H1 (cell line): ENCODE measurements at regions of chr11 and their contacts with region 1.

Region 1: GRCh38 chr11:65850831-65851811 is 6.9 kb downstream of the CFL1 start:
- DNase-seq: peak in 1 of 2 experiments; percentile 93
- H3K4me3 ChIP-seq: no peak overlapping the region
- H3K27ac ChIP-seq: no peak overlapping the region
- H3K4me1 ChIP-seq: peaks cover 0 to 5% (median under 1%) of the 10 kb centered on the region in 4 experiments; a peak in 5 of 7 replicates
- H3K27me3 ChIP-seq: no peaks in the 10 kb centered on the region; a peak in 1 of 7 replicates
- CTCF ChIP-seq: peak in 2 of 3 experiments; percentile 69 to 88; a peak in 3 of 4 replicates
- EP300 ChIP-seq: no peak
- POLR2A ChIP-seq: peak in 1 of 2 experiments; percentile 27; a peak in 2 of 3 replicates
- RAD21 ChIP-seq: peak; percentile 32 to 48; a peak in 3 of 4 replicates

Region 2: GRCh38 chr11:65720237-65720934 is 130.7 kb before region 1 on chr11 and contains the start of gene RNASEH2C:
- CTCF ChIA-PET with region 1: interaction called, 6 read pairs
- POLR2A ChIA-PET with region 1: interaction called, 11 read pairs
- DNase-seq: peak; percentile 44 to 90
- H3K4me3 ChIP-seq: peak within 1 kb of the TSS; percentile 83 to 91 (median 85)
- H3K27ac ChIP-seq: peak within 1 kb of the TSS; percentile 90
- H3K4me1 ChIP-seq: peaks cover 0 to 6% (median 3%) of the 10 kb centered on the region in 4 experiments; a peak in 2 of 7 replicates
- H3K27me3 ChIP-seq: no peaks in the 10 kb centered on the region
- CTCF ChIP-seq: no peak
- EP300 ChIP-seq: no peak
- POLR2A ChIP-seq: peak; percentile 80 to 81
- RAD21 ChIP-seq: no peak
- total RNA-seq, gene RNASEH2C: 37.9 and 40.2 TPM in 2 replicates

Region 3: DNA sequence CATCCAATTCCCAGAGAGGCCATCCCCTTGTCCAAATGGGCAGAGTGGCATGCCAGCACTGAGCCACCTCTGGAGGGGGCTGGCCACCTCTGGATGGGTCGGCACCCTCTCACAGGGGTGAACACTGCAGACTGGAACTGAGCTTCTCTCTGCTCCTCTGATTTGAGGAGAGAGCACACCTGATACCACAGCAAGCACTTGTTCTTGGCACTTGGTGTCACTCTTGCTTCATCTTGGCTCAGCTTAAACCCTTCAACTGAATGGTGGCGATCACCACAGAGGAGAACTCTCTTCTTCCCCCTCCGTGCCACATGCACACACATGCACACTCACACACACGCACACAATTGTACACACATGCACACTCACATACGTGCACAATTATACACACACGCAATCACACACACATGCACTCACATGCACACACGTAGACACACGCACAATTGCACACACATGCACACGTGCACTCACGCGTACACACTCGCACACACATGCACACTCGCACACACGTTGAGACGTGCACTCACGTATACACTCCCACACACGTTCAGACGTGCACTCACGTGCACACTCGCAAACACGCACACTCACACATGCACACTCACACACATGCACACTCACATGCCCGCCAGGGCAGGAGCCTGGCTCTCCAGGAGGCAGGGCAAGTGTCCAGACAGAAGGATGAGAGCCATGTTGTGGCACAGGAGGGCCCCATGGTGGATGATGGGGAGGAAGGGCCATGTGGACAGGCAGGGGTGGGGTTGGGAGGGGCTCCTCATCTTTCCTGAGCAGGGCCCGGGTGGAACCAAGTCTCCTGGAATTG is 40.9 kb before region 1 on chr11:
- CTCF ChIA-PET with region 1: interaction called, 12 read pairs
- POLR2A ChIA-PET with region 1: no interaction called
- DNase-seq: no peak
- H3K4me3 ChIP-seq: no peak overlapping the region
- H3K27ac ChIP-seq: no peak overlapping the region
- H3K4me1 ChIP-seq: no peaks in the 10 kb centered on the region
- H3K27me3 ChIP-seq: no peaks in the 10 kb centered on the region; a peak in 2 of 7 replicates
- CTCF ChIP-seq: 0 out of 4 replicates have a peak, but pooled peaks of 1 of the 3 experiments have one; percentile 20
- EP300 ChIP-seq: no peak
- POLR2A ChIP-seq: no peak
- RAD21 ChIP-seq: peak; percentile 17 to 41; a peak in 3 of 4 replicates

Region 4: GRCh38 chr11:65826962-65827735 is 24.0 kb before region 1 on chr11:
- CTCF ChIA-PET with region 1: interaction called, 52 read pairs
- POLR2A ChIA-PET with region 1: interaction called, 29 read pairs
- DNase-seq: no peak
- H3K4me3 ChIP-seq: no peak overlapping the region
- H3K27ac ChIP-seq: no peak overlapping the region
- H3K4me1 ChIP-seq: no peaks in the 10 kb centered on the region
- H3K27me3 ChIP-seq: no peaks in the 10 kb centered on the region; a peak in 1 of 7 replicates
- CTCF ChIP-seq: no peak
- EP300 ChIP-seq: no peak
- POLR2A ChIP-seq: no peak
- RAD21 ChIP-seq: no peak